Activated T-helper 1 cell treated with anti-CD3 and anti-CD28 coated beads, Interleukin-12 subunit alpha, Interleukin-12 subunit beta, Interleukin-2, Interleukin-4 antibody, amounts not matched to agents 30 ng/mL and 10 ng/mL and 1 ng/mL, durations not matched to agents 14 hours and 24 hours and 36 hours (primary cell): ENCODE measurements at regions of chr1 and their contacts with region 1.

Region 1: GRCh38 chr1:40691538-40692428 is at the start of gene NFYC:
- DNase-seq: peak; percentile 96
- H3K4me3 Mint-ChIP-seq: peak within 1 kb of the TSS; percentile 94
- H3K27ac Mint-ChIP-seq: peak within 1 kb of the TSS; percentile 98
- H3K4me1 Mint-ChIP-seq: peaks cover 62% of the 10 kb centered on the region
- H3K27me3 Mint-ChIP-seq: no peaks in the 10 kb centered on the region
- total RNA-seq, gene NFYC: 79.0 and 85.1 TPM in 2 replicates

Region 2: GRCh38 chr1:40040511-40041465 is 651.0 kb before region 1 on chr1 and contains the start of gene CAP1:
- intact Hi-C with region 1: loop called (anchors 2 kb)
- DNase-seq: peak; percentile 100
- H3K4me3 Mint-ChIP-seq: peak within 1 kb of the TSS; percentile 97
- H3K27ac Mint-ChIP-seq: peak within 1 kb of the TSS; percentile 99
- H3K4me1 Mint-ChIP-seq: peaks cover 70% of the 10 kb centered on the region
- H3K27me3 Mint-ChIP-seq: no peaks in the 10 kb centered on the region
- total RNA-seq, gene CAP1: 421 and 435 TPM in 2 replicates

Region 3: DNA sequence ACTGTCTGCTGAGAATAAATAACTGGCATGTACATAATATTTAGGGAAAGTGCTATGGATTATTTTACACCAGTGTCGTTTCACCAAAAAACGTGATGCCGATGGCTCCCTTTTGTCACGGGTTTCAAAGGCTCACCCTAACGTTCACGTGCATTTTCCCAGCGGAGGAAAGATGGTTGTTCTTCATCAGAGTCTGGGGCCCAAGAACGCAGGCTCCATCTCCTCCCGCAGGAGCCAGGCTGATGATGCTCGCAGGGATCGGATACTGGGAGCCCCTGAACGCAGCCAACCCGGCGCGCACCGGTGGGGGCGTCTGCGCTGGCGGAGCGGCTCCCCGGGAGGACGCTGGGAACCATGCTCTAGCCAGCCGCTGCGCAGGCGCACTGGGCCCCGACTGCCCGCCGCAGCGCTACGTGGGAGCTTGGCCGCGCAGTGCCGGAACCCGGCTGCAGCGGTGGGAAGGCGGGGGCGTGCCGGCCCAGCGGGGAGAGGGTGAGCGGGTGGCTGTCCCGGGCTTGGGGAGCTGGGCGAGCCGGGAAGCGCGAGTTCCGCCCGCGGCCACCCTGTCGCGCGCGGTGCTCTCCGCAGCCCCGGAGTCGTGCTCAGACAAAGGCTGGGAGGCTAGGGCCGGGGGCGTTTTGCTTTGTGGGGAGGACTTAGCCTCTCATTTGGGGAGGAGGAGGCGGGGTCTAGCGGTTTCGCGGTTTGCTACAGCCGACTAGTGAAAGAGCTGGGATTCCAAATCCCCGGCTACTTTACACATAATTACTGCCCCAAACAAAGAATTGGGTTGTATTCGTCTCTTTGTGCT is 241.9 kb before region 1 on chr1 and contains the start of gene ZFP69B:
- intact Hi-C with region 1: loop called (anchors 5 kb)
- DNase-seq: peak; percentile 86
- H3K4me3 Mint-ChIP-seq: peak within 1 kb of the TSS; percentile 84
- H3K27ac Mint-ChIP-seq: peak within 1 kb of the TSS; percentile 90
- H3K4me1 Mint-ChIP-seq: peaks cover 35% of the 10 kb centered on the region
- H3K27me3 Mint-ChIP-seq: no peaks in the 10 kb centered on the region
- total RNA-seq, gene ZFP69B: 5.1 and 5.8 TPM in 2 replicates

Region 4: GRCh38 chr1:40709100-40709801 is 17.5 kb after region 1 on chr1:
- intact Hi-C with region 1: loop called (anchors 1 kb)
- DNase-seq: peak; percentile 73
- H3K4me3 Mint-ChIP-seq: peak overlapping the region; percentile 82
- H3K27ac Mint-ChIP-seq: peak overlapping the region; percentile 83
- H3K4me1 Mint-ChIP-seq: peaks cover 61% of the 10 kb centered on the region
- H3K27me3 Mint-ChIP-seq: no peaks in the 10 kb centered on the region

Region 5: GRCh38 chr1:40753142-40753882 is 61.5 kb after region 1 on chr1:
- intact Hi-C with region 1: loop called (anchors 2 kb)
- DNase-seq: no peak
- H3K4me3 Mint-ChIP-seq: peak overlapping the region; percentile 70
- H3K27ac Mint-ChIP-seq: peak overlapping the region; percentile 92
- H3K4me1 Mint-ChIP-seq: peaks cover 43% of the 10 kb centered on the region
- H3K27me3 Mint-ChIP-seq: no peaks in the 10 kb centered on the region

Region 6: GRCh38 chr1:40862008-40862863 is 170.5 kb after region 1 on chr1 and contains the start of gene CITED4:
- intact Hi-C with region 1: loop called (anchors 1 kb)
- DNase-seq: peak; percentile 95
- H3K4me3 Mint-ChIP-seq: peak within 1 kb of the TSS; percentile 92
- H3K27ac Mint-ChIP-seq: peak within 1 kb of the TSS; percentile 97
- H3K4me1 Mint-ChIP-seq: peaks cover 24% of the 10 kb centered on the region
- H3K27me3 Mint-ChIP-seq: peaks cover 35% of the 10 kb centered on the region
- total RNA-seq, gene CITED4: 4.1 and 5.0 TPM in 2 replicates